ENCODE measurements at regions of chr7 and their contacts with region 1.

Region 1: DNA sequence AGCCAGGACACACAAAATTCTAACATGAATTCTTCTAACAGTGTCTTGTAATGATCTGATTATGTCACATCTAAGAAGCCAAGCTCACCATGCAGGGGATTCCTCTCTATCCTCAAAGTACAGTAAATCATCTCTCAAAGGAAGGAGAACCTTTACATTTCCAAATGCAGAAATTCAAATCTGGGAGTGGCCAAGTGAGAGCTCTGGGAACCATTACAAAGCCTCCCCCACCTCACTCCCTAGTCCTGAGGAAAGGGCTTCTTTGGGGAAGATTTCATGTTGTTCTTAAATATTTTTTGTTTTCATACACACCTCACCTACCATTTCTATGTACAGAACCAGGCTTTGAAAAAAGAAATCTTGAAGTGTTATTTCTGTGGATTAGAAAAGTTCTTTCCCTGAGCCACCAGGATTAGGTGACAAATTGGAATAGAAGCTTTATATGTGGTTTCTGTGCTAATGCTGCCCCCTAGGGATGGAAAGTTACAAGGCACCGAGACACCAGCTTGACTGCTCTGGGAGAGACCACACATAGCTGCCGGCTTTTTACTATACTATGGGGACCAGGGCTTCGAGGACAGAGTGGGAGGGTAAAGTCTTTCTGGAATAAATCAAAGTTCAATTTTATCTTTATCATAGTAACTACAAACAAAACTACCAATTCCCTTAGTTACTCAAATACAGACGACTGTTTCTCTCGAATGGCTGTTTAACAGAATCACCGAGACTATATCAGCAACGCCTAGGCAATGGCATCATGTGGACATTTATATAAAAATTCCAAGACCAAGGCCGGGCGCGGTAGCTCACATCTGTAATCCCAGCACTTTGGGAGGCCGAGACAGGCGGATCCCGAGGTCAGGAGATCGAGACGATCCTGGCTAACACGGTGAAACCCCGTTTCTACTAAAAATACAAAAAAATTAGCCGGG is 116.1 kb downstream of the RNF216 start:
- DNase-seq: peak; percentile 84
- H3K4me3 ChIP-seq: no peak overlapping the region
- H3K27ac ChIP-seq: peak overlapping the region; percentile 12
- H3K4me1 ChIP-seq: peaks cover 37% of the 10 kb centered on the region
- H3K27me3 ChIP-seq: no peaks in the 10 kb centered on the region
- CTCF ChIP-seq: peak; percentile 78 to 81
- POLR2A ChIP-seq: no peak

Region 2: DNA sequence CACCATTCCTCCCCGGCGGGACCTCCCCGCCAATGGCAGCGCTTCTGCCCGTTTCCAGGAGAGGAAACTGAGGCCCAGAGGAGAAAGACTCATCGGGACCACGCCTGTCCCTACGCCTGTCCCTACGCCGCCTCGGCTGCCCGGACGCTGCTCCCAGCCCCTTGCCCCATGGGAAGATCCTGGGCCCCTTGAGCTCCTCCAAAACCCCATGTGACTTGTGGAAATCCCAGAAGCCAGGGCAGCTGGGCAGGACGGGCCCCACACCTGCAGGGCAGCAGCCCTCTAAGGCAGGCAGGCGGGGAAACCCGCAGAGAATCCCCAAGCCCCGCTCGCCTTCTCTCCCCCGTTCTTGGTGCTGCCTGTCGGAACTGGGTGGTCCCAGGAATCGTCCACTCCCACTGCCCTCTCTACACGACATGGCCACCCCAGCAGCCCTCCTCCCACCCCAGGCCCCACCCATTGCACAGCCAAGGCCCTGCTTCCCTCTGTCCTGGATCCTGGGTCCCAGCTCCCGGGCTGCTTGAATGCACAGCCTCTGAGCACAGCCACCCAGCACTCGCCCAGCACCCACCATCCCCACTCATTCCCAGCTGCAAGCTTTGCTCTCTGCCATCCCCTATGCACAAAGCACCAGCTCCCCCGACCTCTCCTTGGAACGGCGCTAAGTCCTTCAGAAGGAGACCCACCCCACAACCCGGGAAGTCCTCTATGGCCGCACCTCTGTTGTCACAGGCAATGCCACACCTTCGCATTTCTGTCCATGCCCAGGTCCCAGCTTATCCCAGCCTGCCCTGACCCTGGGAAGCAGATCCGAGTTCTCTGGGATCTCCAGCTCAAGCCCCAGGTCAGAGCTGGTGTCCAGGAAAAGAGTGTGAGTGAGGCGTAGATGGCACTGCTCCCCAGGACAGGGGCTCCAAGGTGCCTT is 332.0 kb before region 1 on chr7:
- CTCF ChIA-PET with region 1: no interaction called
- POLR2A ChIA-PET with region 1: no interaction called
- dilution Hi-C with region 1: no loop called
- intact Hi-C with region 1: no loop called
- DNase-seq: no peak
- H3K4me3 ChIP-seq: no peak overlapping the region
- H3K27ac ChIP-seq: no peak overlapping the region
- H3K4me1 ChIP-seq: no peaks in the 10 kb centered on the region
- H3K27me3 ChIP-seq: no peaks in the 10 kb centered on the region
- CTCF ChIP-seq: no peak
- POLR2A ChIP-seq: no peak

Region 3: DNA sequence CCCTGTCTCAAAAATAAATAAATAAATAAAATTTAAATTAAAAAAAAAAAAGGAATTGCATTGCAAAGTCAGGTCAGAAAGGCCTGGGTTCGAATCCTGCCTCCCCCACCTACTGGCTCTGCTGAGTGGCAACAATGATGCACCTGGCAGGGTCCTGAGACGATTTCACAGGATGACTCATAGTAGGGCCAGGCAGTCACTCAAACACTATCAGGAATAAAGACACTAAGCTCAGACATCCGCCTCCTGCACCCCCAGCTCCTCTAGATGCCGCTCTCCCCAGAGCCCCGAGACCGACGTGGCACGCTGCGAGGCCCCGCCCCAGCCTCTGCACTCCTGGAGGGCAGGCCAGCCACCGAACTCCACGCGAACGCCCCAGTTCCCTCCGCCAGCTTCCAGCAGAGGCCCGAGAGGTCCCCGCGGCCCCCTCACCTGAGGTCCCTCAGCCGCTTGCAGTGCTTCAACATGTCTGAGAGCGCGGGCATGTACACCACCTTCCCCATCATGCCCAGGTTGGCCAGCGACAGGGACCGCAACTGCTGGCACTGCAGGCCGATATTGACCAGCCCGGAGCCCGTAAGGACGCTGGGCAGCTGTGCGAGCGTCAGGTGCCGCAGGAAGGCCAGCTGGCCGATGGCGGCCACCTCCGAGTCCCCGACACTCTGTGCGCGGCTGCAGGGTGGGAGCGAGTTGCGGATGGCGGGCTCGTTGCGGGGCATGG is 165.1 kb before region 1 on chr7:
- CTCF ChIA-PET with region 1: interaction called, 71 read pairs
- POLR2A ChIA-PET with region 1: no interaction called
- dilution Hi-C with region 1: loop called (anchors 10 kb)
- intact Hi-C with region 1: no loop called
- DNase-seq: no peak
- H3K4me3 ChIP-seq: no peak overlapping the region
- H3K27ac ChIP-seq: no peak overlapping the region
- H3K4me1 ChIP-seq: no peaks in the 10 kb centered on the region
- H3K27me3 ChIP-seq: no peaks in the 10 kb centered on the region
- CTCF ChIP-seq: no peak
- POLR2A ChIP-seq: no peak

Region 4: DNA sequence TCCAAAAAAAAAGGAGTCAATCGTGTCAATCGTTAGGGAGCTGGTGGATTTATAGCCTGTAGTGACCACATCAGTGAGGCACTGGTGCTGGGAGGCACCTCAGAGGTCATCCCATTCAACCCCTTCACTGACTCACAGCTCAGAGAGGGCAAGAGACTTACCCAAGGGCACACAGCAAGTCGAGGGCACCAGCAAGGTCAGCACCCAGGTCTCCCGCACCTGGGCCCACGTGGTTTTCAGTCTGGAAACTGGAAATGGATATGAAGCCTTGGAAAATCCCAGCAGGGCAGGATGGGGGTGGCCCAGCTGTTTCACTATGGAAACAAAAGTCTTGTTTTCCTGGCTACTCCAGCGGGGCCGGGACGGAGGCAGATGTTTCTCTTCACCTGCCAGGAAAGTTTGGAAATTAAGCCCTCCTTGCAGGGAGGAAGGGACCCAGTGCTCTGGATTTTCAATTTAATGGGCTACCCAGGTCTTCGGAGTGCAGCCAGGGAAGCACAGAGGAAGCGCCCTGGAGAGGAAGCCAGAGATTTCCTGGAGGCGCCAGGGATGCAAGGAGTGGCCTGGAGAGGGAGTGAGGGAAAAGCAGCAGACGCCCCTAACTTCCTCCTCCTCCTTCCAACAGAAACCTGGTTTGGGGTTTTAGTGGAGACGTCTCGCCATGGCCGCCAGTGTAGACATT is 84.5 kb before region 1 on chr7:
- CTCF ChIA-PET with region 1: interaction called, 10 read pairs
- POLR2A ChIA-PET with region 1: no interaction called
- dilution Hi-C with region 1: no loop called
- intact Hi-C with region 1: no loop called
- DNase-seq: peak; percentile 22
- H3K4me3 ChIP-seq: peak overlapping the region in 1 of 3 experiments; percentile 19
- H3K27ac ChIP-seq: peak overlapping the region; percentile 13
- H3K4me1 ChIP-seq: peaks cover 11% of the 10 kb centered on the region
- H3K27me3 ChIP-seq: no peaks in the 10 kb centered on the region
- CTCF ChIP-seq: no peak
- POLR2A ChIP-seq: no peak

Region 5: DNA sequence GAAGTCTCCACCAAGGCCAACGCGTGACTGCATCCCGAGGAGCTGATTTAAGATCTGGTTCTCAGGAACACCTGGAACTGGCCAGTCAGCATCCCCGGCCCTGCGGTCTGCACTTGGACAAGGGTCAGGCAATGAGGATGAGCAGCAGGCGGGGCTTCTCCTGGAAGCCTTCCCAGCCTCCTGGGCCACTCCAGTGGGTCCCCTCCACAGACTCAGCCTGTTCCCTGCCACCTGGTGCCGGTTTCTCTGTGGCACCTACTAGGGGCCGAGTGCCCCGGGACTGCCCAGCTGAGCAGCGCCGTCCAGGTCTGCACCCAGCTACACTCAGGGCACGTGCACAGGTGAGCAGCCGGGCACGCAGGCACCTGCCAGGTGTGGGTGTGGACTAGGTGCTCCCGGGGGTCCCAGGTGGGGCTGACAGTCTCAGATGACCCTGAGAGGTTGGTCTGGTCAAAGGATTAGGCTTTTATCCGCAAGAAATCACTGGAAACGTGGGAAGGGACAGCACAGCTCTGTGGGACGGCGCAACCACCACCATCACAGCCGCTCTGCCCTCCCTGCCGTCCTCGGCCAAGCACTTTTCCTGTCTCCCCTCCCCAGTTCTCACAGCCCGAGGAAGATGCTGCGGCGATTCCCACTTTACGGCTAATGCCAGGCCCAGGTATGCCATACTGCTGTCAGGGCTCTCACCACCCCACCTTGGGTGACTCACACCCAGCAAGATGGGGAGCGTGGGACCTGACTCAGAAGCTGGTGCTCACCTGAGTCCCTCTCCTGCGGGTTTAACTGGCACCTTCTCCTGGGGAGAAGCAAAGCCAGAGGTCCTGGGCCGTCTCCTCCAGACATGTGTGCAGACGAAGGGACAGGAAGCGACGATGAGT is 49.9 kb before region 1 on chr7:
- CTCF ChIA-PET with region 1: interaction called, 45 read pairs
- POLR2A ChIA-PET with region 1: no interaction called
- dilution Hi-C with region 1: no loop called
- intact Hi-C with region 1: no loop called
- DNase-seq: no peak
- H3K4me3 ChIP-seq: no peak overlapping the region
- H3K27ac ChIP-seq: no peak overlapping the region
- H3K4me1 ChIP-seq: no peaks in the 10 kb centered on the region
- H3K27me3 ChIP-seq: no peaks in the 10 kb centered on the region
- CTCF ChIP-seq: no peak
- POLR2A ChIP-seq: no peak

Region 6: DNA sequence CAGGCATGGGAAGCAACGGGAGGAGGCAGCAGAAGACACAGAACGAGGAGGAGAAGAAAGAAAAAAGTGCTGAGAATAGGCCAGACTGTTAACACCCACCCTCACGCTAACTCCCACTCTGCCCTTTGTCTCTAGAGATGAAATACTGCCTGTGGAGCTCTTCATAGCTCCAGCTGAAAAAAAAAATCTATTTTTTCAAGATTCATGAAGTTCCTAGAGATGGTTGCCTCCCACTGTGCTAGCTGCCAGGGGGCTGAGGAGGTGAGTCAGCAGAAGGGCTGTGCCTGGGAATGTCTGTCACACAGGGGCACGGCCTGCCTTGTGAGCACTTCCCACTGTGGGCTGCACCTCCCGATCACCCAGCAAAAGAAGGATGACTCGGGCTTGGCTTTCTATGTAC is 28.4 kb before region 1 on chr7:
- CTCF ChIA-PET with region 1: interaction called, 19 read pairs
- POLR2A ChIA-PET with region 1: interaction called, 3 read pairs
- dilution Hi-C with region 1: no loop called
- intact Hi-C with region 1: no loop called
- DNase-seq: peak; percentile 84
- H3K4me3 ChIP-seq: no peak overlapping the region
- H3K27ac ChIP-seq: peak overlapping the region; percentile 16
- H3K4me1 ChIP-seq: peaks cover 42% of the 10 kb centered on the region
- H3K27me3 ChIP-seq: no peaks in the 10 kb centered on the region
- CTCF ChIP-seq: no peak
- POLR2A ChIP-seq: no peak

Region 7: DNA sequence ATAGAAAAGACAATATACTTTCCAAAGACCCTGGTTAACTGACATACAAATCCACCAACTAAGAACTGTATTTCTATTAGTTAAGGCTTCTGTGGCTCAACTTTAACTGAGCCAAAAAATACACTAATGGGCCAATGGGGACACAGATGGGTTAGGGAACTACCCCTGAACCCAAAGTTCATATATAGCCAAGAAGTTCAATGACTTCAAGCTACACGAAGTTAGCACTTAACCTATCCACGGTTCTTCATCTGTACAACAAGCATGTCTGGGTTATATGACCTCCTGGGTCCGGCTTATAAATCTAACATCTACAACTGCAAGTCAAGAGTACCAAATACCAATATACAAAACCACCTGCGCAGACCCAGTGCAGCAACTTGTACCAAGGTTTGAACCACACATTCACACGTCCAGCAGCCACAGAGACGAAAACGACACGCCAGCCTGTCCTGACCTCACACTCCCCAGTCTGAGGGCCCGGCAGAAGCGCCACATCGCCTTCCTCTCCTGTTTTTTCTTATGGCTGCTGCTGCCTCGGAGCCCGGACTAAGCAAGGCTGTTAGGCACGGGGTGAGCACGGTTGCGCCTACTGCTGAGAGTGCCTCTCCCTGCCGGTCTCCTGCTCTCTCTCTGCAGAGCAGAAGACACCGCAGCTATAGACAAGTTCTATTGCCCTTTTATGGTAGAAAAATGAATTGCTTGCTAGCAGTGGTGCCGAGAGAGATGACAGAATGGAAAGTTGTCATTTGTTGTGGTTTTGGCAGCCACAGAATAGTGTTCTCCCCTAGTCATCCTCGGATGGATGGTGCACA is 29.8 kb after region 1 on chr7:
- CTCF ChIA-PET with region 1: interaction called, 16 read pairs
- POLR2A ChIA-PET with region 1: no interaction called
- dilution Hi-C with region 1: no loop called
- intact Hi-C with region 1: no loop called
- DNase-seq: no peak
- H3K4me3 ChIP-seq: no peak overlapping the region
- H3K27ac ChIP-seq: no peak overlapping the region
- H3K4me1 ChIP-seq: peaks cover 34% of the 10 kb centered on the region
- H3K27me3 ChIP-seq: no peaks in the 10 kb centered on the region
- CTCF ChIP-seq: no peak
- POLR2A ChIP-seq: no peak

Measured in endothelial cell of umbilical vein (primary cell).